Mammary epithelial cell (primary cell): ENCODE measurements at regions of chr17 and their contacts with region 1.

Region 1: DNA sequence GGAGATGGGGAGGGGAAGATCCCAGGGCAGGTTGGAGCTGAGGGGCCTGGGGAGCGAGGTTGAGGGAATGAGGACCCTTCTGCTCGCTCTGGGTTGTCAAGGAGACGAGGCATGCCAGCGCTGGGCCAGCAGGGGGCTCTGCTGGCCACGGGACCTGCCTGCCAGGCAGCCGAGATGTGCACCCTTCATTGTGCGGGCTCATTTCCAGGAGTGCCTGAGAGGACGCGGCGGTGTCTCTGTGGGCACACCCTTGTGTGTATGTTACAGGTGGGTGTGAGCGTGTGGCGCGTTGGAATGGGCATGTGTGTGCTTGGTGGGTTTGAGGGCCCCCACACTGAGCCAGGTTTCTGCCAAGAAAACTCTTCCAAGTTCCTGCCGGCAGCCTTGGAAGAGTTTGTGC is 15.9 kb downstream of the ARHGAP23 start:
- DNase-seq: peak; percentile 54
- H3K4me3 ChIP-seq: no peak overlapping the region
- H3K27ac ChIP-seq: no peak overlapping the region
- H3K4me1 ChIP-seq: peaks cover 20% of the 10 kb centered on the region
- H3K27me3 ChIP-seq: no peaks in the 10 kb centered on the region
- CTCF ChIP-seq: peak; percentile 88 to 97

Region 2: GRCh38 chr17:38361694-38362465 is 82.3 kb before region 1 on chr17:
- CTCF ChIA-PET with region 1: no interaction called
- dilution Hi-C with region 1: no loop called
- in situ Hi-C with region 1: no loop called
- intact Hi-C with region 1: no loop called
- DNase-seq: peak; percentile 36
- H3K4me3 ChIP-seq: no peak overlapping the region
- H3K27ac ChIP-seq: no peak overlapping the region
- H3K4me1 ChIP-seq: peaks cover 32% of the 10 kb centered on the region
- H3K27me3 ChIP-seq: no peaks in the 10 kb centered on the region
- CTCF ChIP-seq: no peak

Region 3: GRCh38 chr17:38421871-38422827 is 22.0 kb before region 1 on chr17:
- CTCF ChIA-PET with region 1: interaction called, 6 read pairs
- dilution Hi-C with region 1: no loop called
- in situ Hi-C with region 1: no loop called
- intact Hi-C with region 1: loop called (anchors 2 kb)
- DNase-seq: no peak
- H3K4me3 ChIP-seq: no peak overlapping the region
- H3K27ac ChIP-seq: no peak overlapping the region
- H3K4me1 ChIP-seq: no peaks in the 10 kb centered on the region
- H3K27me3 ChIP-seq: peaks cover 15% of the 10 kb centered on the region
- CTCF ChIP-seq: no peak

Region 4: GRCh38 chr17:38469875-38470274 is 25.7 kb after region 1 on chr17:
- CTCF ChIA-PET with region 1: interaction called, 11 read pairs
- dilution Hi-C with region 1: no loop called
- in situ Hi-C with region 1: no loop called
- intact Hi-C with region 1: no loop called
- DNase-seq: no peak
- H3K4me3 ChIP-seq: no peak overlapping the region
- H3K27ac ChIP-seq: no peak overlapping the region
- H3K4me1 ChIP-seq: peaks cover 26% of the 10 kb centered on the region
- H3K27me3 ChIP-seq: no peaks in the 10 kb centered on the region
- CTCF ChIP-seq: no peak

Region 5: DNA sequence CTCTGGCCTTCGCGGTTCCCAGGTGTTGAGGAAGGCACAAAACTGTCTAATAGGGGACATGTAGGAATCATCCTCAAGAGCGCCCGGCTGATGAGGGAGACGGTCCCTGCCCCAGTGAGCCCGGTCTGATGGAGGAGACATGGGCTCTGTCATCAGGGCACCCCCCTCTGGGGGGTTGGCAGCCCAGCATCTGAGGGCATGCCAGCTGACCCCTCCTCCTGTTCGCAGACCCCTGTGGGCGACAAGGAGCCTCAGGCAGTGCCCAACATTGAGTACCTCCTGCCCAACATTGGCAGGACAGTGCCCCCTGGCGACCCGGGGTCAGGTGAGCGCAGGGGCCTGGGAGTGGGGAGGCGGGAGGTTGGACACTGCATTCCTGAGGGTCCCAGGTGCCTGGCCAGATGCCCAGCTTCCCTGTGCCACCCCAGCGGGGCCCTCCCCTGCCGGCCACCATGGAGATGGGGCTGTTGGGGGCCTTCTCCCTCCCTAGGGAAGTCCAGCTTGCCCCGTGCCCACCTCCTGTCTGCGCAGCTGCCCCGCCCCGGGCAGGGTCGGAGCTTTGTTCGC is 54.1 kb after region 1 on chr17:
- CTCF ChIA-PET with region 1: no interaction called
- dilution Hi-C with region 1: no loop called
- in situ Hi-C with region 1: no loop called
- intact Hi-C with region 1: loop called (anchors 2 kb)
- DNase-seq: no peak
- H3K4me3 ChIP-seq: no peak overlapping the region
- H3K27ac ChIP-seq: no peak overlapping the region
- H3K4me1 ChIP-seq: no peaks in the 10 kb centered on the region
- H3K27me3 ChIP-seq: no peaks in the 10 kb centered on the region
- CTCF ChIP-seq: no peak

Region 6: GRCh38 chr17:38509008-38509771 is 65.0 kb after region 1 on chr17:
- CTCF ChIA-PET with region 1: no interaction called
- dilution Hi-C with region 1: no loop called
- in situ Hi-C with region 1: no loop called
- intact Hi-C with region 1: no loop called
- DNase-seq: peak; percentile 49
- H3K4me3 ChIP-seq: no peak overlapping the region
- H3K27ac ChIP-seq: no peak overlapping the region
- H3K4me1 ChIP-seq: peaks cover 10% of the 10 kb centered on the region
- H3K27me3 ChIP-seq: no peaks in the 10 kb centered on the region
- CTCF ChIP-seq: peak; percentile 59 to 70

Region 7: DNA sequence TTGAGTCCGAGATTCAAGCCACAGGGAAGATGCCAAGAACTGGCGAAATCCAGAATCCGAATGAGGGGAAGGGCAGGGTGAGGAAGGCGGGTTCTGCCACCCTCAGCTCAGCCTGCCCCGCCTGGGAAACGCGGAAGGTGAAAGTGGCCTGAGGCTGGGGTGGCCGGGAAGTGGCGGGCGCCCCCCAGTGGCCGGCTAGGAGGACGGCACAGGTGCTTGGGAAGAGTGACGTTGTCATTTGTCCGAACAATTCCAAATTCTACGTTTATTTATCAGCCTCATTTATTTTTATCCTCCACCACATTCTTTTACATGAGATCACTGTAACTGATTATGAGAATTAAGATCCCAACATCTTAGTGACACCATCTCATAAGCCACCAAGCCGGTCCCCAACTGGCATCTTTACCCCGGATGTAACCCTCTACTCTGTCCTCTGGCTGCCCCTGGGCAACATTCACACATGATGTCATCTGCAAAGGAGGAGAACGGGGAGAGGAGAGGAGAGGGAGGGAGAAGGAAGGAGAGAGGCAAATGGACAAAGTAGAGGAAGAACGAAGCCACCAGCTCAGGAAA is 140.3 kb after region 1 on chr17:
- CTCF ChIA-PET with region 1: no interaction called
- dilution Hi-C with region 1: no loop called
- in situ Hi-C with region 1: loop called in 1 of 2 experiments (anchors 10 kb)
- intact Hi-C with region 1: loop called (anchors 1 kb)
- DNase-seq: peak; percentile 54
- H3K4me3 ChIP-seq: no peak overlapping the region
- H3K27ac ChIP-seq: no peak overlapping the region
- H3K4me1 ChIP-seq: peaks cover 23% of the 10 kb centered on the region
- H3K27me3 ChIP-seq: no peaks in the 10 kb centered on the region
- CTCF ChIP-seq: peak; percentile 87 to 97